B cell (primary cell): ENCODE measurements at regions of chr6 and their contacts with region 1.

Region 1: GRCh38 chr6:134288538-134289203 is 29.2 kb downstream of the SGK1 start:
- DNase-seq: peak; percentile 50
- ATAC-seq: peak; percentile 64
- H3K4me3 ChIP-seq: no peak overlapping the region
- H3K4me3 Mint-ChIP-seq: peak overlapping the region; percentile 30
- H3K27ac ChIP-seq: peak overlapping the region in 1 of 2 donors; percentile 28
- H3K27ac Mint-ChIP-seq: peak overlapping the region; percentile 47
- H3K4me1 ChIP-seq: peaks cover 12% of the 10 kb centered on the region in 2 donors
- H3K4me1 Mint-ChIP-seq: peaks cover 19% of the 10 kb centered on the region
- H3K27me3 ChIP-seq: no peaks in the 10 kb centered on the region
- H3K27me3 Mint-ChIP-seq: no peaks in the 10 kb centered on the region
- CTCF ChIP-seq: no peak

Region 2: GRCh38 chr6:134196568-134197193 is 92.0 kb before region 1 on chr6:
- CTCF ChIA-PET with region 1: no interaction called
- POLR2A ChIA-PET with region 1: no interaction called
- intact Hi-C with region 1: no loop called
- DNase-seq: no peak
- ATAC-seq: no peak
- H3K4me3 ChIP-seq: no peak overlapping the region
- H3K4me3 Mint-ChIP-seq: no peak overlapping the region
- H3K27ac ChIP-seq: no peak overlapping the region
- H3K27ac Mint-ChIP-seq: no peak overlapping the region
- H3K4me1 ChIP-seq: peaks cover 8 to 14% of the 10 kb centered on the region in 2 donors
- H3K4me1 Mint-ChIP-seq: peaks cover 17% of the 10 kb centered on the region
- H3K27me3 ChIP-seq: no peaks in the 10 kb centered on the region
- H3K27me3 Mint-ChIP-seq: no peaks in the 10 kb centered on the region
- CTCF ChIP-seq: no peak

Region 3: GRCh38 chr6:134272374-134272773 is 16.3 kb before region 1 on chr6:
- CTCF ChIA-PET with region 1: no interaction called
- POLR2A ChIA-PET with region 1: no interaction called
- intact Hi-C with region 1: no loop called
- DNase-seq: no peak
- ATAC-seq: no peak
- H3K4me3 ChIP-seq: no peak overlapping the region
- H3K4me3 Mint-ChIP-seq: no peak overlapping the region
- H3K27ac ChIP-seq: no peak overlapping the region
- H3K27ac Mint-ChIP-seq: no peak overlapping the region
- H3K4me1 ChIP-seq: peaks cover 5 to 12% of the 10 kb centered on the region in 2 donors
- H3K4me1 Mint-ChIP-seq: peaks cover 6% of the 10 kb centered on the region
- H3K27me3 ChIP-seq: no peaks in the 10 kb centered on the region
- H3K27me3 Mint-ChIP-seq: no peaks in the 10 kb centered on the region
- CTCF ChIP-seq: no peak

Region 4: GRCh38 chr6:134317471-134318131 is 28.9 kb after region 1 on chr6 and contains the start of gene SGK1:
- CTCF ChIA-PET with region 1: no interaction called
- POLR2A ChIA-PET with region 1: interaction called, 11 read pairs
- intact Hi-C with region 1: no loop called
- DNase-seq: peak; percentile 53
- ATAC-seq: peak; percentile 47
- H3K4me3 ChIP-seq: peak within 1 kb of the TSS; percentile 36 to 70 (median 51)
- H3K4me3 Mint-ChIP-seq: peak within 1 kb of the TSS; percentile 83
- H3K27ac ChIP-seq: no peak within 1 kb of the TSS
- H3K27ac Mint-ChIP-seq: no peak within 1 kb of the TSS
- H3K4me1 ChIP-seq: peaks cover 9 to 16% of the 10 kb centered on the region in 2 donors
- H3K4me1 Mint-ChIP-seq: peaks cover 16% of the 10 kb centered on the region
- H3K27me3 ChIP-seq: peaks cover 0 to 21% (median 17%) of the 10 kb centered on the region in 4 experiments
- H3K27me3 Mint-ChIP-seq: peaks cover 36% of the 10 kb centered on the region
- CTCF ChIP-seq: no peak
- total RNA-seq, gene SGK1: 32.4 and 37.3 TPM in 2 replicates